HepG2 (cell line): ENCODE measurements at regions of chr10 and their contacts with region 1.

Region 1: GRCh38 chr10:80265740-80266512 is 23.5 kb downstream of the MAT1A start:
- DNase-seq: no peak
- ATAC-seq: peak; percentile 55
- H3K4me3 ChIP-seq: no peak overlapping the region
- H3K27ac ChIP-seq: peak overlapping the region; percentile 90
- H3K4me1 ChIP-seq: peaks cover 87% of the 10 kb centered on the region
- H3K27me3 ChIP-seq: no peaks in the 10 kb centered on the region
- CTCF ChIP-seq: no peak
- EP300 ChIP-seq: no peak
- POLR2A ChIP-seq: no peak
- RAD21 ChIP-seq: no peak

Region 2: DNA sequence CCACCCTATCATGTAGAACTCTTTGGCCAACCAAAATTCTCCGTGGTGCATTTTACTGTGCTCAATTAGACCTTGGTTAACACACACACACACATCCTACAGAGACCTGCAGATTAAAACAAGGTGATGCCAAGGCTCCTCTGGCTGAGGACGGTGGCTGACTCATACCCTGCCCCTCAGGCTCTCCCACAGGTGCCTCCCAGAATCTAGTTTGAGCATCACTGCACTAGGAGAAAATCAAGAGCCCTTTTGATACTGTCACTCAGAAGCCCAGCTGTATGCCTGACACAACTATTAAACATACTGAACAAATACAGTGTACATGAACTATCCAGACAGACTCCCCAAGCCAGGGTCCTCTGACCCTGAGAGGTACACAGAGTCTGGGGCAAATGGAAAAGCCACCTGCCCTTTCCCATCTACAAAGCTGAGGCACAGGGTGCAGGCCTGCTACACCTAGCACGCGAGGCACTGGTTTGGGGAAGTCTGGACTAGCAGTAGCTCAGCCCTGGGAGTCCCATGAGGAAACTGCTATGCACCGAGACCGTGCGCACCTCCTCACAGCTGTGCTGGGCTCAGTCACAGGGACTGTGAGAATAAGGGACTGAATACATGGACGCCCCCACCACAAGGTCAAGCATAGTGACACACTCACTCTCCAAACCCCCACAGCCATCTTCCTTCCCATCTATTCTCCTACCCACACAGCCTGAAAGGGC is 15.2 kb after region 1 on chr10:
- CTCF ChIA-PET with region 1: interaction called, 4 read pairs
- POLR2A ChIA-PET with region 1: interaction called, 69 read pairs
- in situ Hi-C with region 1: no loop called
- intact Hi-C with region 1: no loop called
- DNase-seq: no peak
- ATAC-seq: peak; percentile 9; the same call in 2 of the 3 replicates
- H3K4me3 ChIP-seq: no peak overlapping the region
- H3K27ac ChIP-seq: peak overlapping the region; percentile 83
- H3K4me1 ChIP-seq: peaks cover 60% of the 10 kb centered on the region
- H3K27me3 ChIP-seq: no peaks in the 10 kb centered on the region
- CTCF ChIP-seq: no peak
- EP300 ChIP-seq: no peak
- POLR2A ChIP-seq: no peak
- RAD21 ChIP-seq: no peak